ENCODE measurements at regions of chr6 and their contacts with region 1.

Region 1: GRCh38 chr6:47061309-47062300 is 19.5 kb upstream of the ADGRF1 start:
- DNase-seq: peak; percentile 88
- H3K4me3 ChIP-seq: no peak overlapping the region
- H3K27ac ChIP-seq: peak overlapping the region; percentile 14 to 75 (median 46)
- H3K4me1 ChIP-seq: peaks cover 0 to 37% (median 22%) of the 10 kb centered on the region in 4 donors
- H3K27me3 ChIP-seq: no peaks in the 10 kb centered on the region
- CTCF ChIP-seq: peak in 1 of 4 experiments; percentile 14
- EP300 ChIP-seq: peak in 2 of 4 donors; percentile 74 to 76
- POLR2A ChIP-seq: no peak

Region 2: DNA sequence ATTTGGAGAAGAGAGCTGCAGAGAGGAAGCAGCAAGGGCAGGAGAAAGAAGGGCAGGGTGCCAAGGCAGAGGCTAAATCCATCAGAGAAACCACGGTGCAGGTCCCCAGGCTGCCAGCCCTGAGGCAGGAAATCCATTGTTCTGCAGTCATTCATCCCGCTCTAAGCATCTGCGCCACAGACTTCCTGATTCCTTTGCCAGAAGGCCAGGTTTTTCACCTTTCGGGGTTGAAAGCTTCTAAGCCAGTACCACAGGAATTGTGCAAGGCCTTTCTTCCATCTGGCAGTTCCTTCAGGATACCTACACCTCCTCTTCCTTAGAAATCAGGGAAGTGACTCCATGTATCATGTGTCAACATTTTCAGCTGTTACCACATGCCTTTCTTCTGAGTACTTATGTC is 185.5 kb before region 1 on chr6:
- intact Hi-C with region 1: no loop called
- DNase-seq: no peak
- H3K4me3 ChIP-seq: no peak overlapping the region
- H3K27ac ChIP-seq: no peak overlapping the region
- H3K4me1 ChIP-seq: no peaks in the 10 kb centered on the region
- H3K27me3 ChIP-seq: no peaks in the 10 kb centered on the region
- CTCF ChIP-seq: no peak
- EP300 ChIP-seq: no peak
- POLR2A ChIP-seq: no peak

Region 3: DNA sequence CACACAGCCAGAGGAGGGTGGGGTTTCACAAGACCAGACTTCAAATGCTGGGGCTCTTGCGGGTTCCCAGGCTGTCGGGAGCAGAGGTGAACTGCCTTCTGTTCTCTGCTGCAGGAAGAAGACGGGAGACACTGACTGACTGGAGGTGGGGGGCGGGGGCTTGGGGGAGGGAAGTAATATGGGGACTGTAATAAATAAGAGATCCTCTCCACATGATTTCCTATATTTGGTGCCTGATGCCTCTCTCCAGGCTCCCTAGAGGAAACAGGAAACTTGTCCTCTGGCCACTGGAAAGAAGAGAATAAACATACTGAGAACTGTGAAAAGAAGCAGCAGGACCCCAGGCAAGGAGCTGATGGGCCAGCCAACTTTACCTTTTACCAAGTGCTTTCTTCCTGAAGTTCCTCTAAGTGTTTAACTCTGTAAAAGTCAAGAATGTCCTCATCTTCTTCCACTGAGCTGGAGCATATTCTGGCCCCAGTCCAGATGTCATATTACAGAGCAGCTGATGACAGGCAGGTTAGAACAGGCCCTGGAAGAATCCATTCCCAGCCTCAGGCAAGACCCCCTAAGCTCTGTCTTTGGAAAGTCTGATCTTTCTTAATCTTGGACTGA is 106.7 kb before region 1 on chr6:
- intact Hi-C with region 1: no loop called
- DNase-seq: no peak
- H3K4me3 ChIP-seq: no peak overlapping the region
- H3K27ac ChIP-seq: peak overlapping the region in 1 of 4 donors; percentile 12
- H3K4me1 ChIP-seq: no peaks in the 10 kb centered on the region
- H3K27me3 ChIP-seq: no peaks in the 10 kb centered on the region
- CTCF ChIP-seq: no peak
- EP300 ChIP-seq: no peak
- POLR2A ChIP-seq: no peak

Region 4: GRCh38 chr6:47083586-47084047 is 22.0 kb after region 1 on chr6:
- intact Hi-C with region 1: loop called (anchors 2 kb)
- DNase-seq: peak; percentile 98
- H3K4me3 ChIP-seq: peak overlapping the region in 1 of 4 donors; percentile 12
- H3K27ac ChIP-seq: peak overlapping the region; percentile 41 to 79 (median 73)
- H3K4me1 ChIP-seq: peaks cover 0 to 37% (median 22%) of the 10 kb centered on the region in 4 donors
- H3K27me3 ChIP-seq: no peaks in the 10 kb centered on the region
- CTCF ChIP-seq: no peak
- EP300 ChIP-seq: peak; percentile 75 to 96 (median 86)
- POLR2A ChIP-seq: no peak